Ovary (tissue), 10 donors: ENCODE measurements at regions of chr1 and their contacts with region 1.

Region 1: GRCh38 chr1:18440385-18441226 is 40.1 kb upstream of the KLHDC7A start:
- DNase-seq: no peak
- H3K4me3 ChIP-seq: no peak overlapping the region
- H3K27ac ChIP-seq: no peak overlapping the region
- H3K4me1 ChIP-seq: no peaks in the 10 kb centered on the region
- H3K27me3 ChIP-seq: no peaks in the 10 kb centered on the region
- CTCF ChIP-seq: no peak
- EP300 ChIP-seq: no peak
- POLR2A ChIP-seq: no peak

Region 2: GRCh38 chr1:18458133-18459092 is 17.8 kb after region 1 on chr1:
- intact Hi-C with region 1: loop called in 1 of 4 experiments (anchors 2 kb)
- DNase-seq: no peak
- H3K4me3 ChIP-seq: no peak overlapping the region
- H3K27ac ChIP-seq: no peak overlapping the region
- H3K4me1 ChIP-seq: no peaks in the 10 kb centered on the region
- H3K27me3 ChIP-seq: no peaks in the 10 kb centered on the region
- CTCF ChIP-seq: no peak
- EP300 ChIP-seq: no peak
- POLR2A ChIP-seq: no peak

Region 3: DNA sequence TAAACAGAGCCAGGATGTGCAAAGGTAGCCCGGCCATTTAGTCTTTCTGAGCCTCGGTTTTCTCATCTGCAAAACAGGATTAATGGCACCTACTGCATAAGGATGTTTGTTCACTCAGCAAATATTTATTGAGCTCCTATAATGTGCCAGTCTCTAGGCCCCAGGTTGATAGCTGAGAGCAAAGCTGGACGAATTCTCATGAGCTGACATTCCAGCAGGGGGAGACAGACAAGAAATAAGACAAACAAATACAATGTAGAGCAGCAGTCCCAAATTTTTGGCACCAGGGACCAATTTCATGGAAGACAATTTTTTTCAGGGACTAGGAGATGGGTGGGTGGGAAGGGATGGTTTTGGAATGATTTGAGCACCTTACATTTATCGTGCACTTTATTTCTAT is 115.8 kb after region 1 on chr1:
- intact Hi-C with region 1: no loop called
- DNase-seq: no peak
- H3K4me3 ChIP-seq: no peak overlapping the region
- H3K27ac ChIP-seq: no peak overlapping the region
- H3K4me1 ChIP-seq: no peaks in the 10 kb centered on the region
- H3K27me3 ChIP-seq: no peaks in the 10 kb centered on the region
- CTCF ChIP-seq: no peak
- EP300 ChIP-seq: no peak
- POLR2A ChIP-seq: no peak